HepG2 (cell line): ENCODE measurements at regions of chr10 and their contacts with region 1.

Region 1: GRCh38 chr10:119542988-119543813 is 682 bp upstream of the RGS10 start:
- DNase-seq: peak; percentile 39
- ATAC-seq: peak; percentile 83
- H3K4me3 ChIP-seq: peak overlapping the region; percentile 46 to 71 (median 55)
- H3K27ac ChIP-seq: no peak overlapping the region
- H3K4me1 ChIP-seq: peaks cover 21% of the 10 kb centered on the region
- H3K27me3 ChIP-seq: peaks cover 6 to 43% of the 10 kb centered on the region in 2 experiments; a peak in 4 of 5 replicates
- CTCF ChIP-seq: peak; percentile 61
- EP300 ChIP-seq: no peak
- POLR2A ChIP-seq: no peak
- RAD21 ChIP-seq: peak; percentile 52

Region 2: DNA sequence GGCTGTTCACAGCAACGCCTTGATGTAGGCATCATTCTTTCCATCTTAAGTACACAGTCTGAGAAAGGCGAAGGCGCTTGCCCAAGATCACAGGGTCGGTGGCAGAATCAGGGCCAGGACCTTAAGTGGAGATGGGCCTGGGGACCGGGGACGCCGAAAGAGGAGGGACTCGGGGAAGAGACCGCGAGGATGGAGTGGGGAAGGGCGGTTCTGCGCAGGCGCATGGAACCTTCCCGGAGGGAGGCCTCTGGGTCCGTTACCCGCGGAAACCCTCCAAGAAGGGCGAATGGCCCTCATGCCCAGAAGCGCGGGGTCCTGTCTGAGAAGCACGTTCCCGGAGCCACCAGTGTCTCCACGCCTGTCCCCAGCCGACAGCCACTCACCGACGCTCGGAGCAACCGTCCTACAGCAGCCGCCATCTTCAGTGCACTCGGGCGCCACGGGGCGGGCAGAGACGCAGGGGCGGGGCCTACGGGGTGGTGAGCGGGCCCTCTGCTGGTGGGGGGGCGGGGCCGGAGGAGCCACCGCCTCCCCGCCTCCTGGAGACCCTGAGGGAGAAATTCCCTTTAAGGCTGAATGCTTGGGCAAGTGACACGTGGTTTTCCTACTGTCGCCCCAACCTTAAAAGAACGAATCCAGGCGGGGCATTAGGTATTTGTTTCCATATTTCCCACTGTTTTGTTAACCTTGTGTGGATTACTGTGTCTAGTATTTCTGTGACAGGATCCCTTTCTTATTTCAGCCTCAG is 364.7 kb before region 1 on chr10 and contains the start of gene PRDX3:
- CTCF ChIA-PET with region 1: no interaction called
- POLR2A ChIA-PET with region 1: no interaction called
- in situ Hi-C with region 1: loop called (anchors 25 kb)
- intact Hi-C with region 1: no loop called
- DNase-seq: peak; percentile 85
- ATAC-seq: peak; percentile 90
- H3K4me3 ChIP-seq: peak within 1 kb of the TSS; percentile 75 to 94 (median 81)
- H3K27ac ChIP-seq: peak within 1 kb of the TSS; percentile 93
- H3K4me1 ChIP-seq: peaks cover 52% of the 10 kb centered on the region
- H3K27me3 ChIP-seq: no peaks in the 10 kb centered on the region; a peak in 1 of 5 replicates
- CTCF ChIP-seq: peak; percentile 44
- EP300 ChIP-seq: no peak
- POLR2A ChIP-seq: peak; percentile 89 to 95
- RAD21 ChIP-seq: no peak
- total RNA-seq, gene PRDX3: 407 and 643 TPM in 2 replicates

Region 3: DNA sequence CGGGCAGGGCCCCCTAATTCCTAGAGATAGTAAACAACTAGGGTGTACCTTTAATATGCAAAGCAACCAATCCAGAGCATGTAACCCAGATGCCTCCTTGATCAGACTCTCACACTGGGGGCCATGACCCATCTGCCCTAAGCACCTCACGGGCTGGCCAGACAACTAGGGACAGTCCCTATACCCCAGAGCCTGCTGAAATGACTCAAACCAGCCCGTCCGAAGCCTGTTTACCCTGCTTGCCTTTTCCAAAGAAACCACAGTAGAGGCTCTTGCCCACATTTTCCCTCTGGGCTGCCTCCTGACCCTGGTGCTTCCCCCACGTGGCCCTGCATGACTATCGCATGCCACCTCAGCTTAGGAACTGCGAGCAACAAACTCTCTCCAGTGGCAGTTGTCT is 46.9 kb before region 1 on chr10:
- CTCF ChIA-PET with region 1: no interaction called
- POLR2A ChIA-PET with region 1: no interaction called
- in situ Hi-C with region 1: loop called (anchors 5 kb)
- intact Hi-C with region 1: loop called (anchors 5 kb)
- DNase-seq: peak; percentile 29
- ATAC-seq: no peak; the same call in 2 of the 3 replicates
- H3K4me3 ChIP-seq: no peak overlapping the region
- H3K27ac ChIP-seq: no peak overlapping the region
- H3K4me1 ChIP-seq: peaks cover 72% of the 10 kb centered on the region
- H3K27me3 ChIP-seq: no peaks in the 10 kb centered on the region; a peak in 1 of 5 replicates
- CTCF ChIP-seq: no peak
- EP300 ChIP-seq: no peak
- POLR2A ChIP-seq: no peak
- RAD21 ChIP-seq: no peak

Region 4: DNA sequence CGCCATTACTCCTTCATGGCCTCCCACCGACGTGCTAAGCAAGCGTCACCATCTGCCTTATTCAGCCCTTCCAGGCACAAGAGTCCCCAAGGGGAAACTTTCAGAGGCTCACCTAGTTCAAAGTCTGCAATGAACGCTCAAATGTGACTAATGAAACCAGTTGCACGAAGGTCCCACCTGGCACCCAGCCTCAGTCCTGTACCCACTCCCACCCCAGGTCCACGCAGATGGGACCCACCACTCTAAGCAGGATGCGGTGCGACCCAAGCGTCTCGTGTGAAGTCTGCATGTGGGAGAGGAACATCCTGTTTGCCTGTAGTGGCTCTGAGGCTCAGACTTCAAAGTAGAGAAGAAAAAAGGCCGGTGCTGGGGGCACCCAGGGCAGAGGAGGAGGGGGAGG is 41.0 kb before region 1 on chr10:
- CTCF ChIA-PET with region 1: no interaction called
- POLR2A ChIA-PET with region 1: no interaction called
- in situ Hi-C with region 1: loop called (anchors 5 kb)
- intact Hi-C with region 1: loop called (anchors 5 kb)
- DNase-seq: no peak
- ATAC-seq: no peak
- H3K4me3 ChIP-seq: no peak overlapping the region; a peak in 1 of 6 replicates
- H3K27ac ChIP-seq: no peak overlapping the region
- H3K4me1 ChIP-seq: peaks cover 54% of the 10 kb centered on the region
- H3K27me3 ChIP-seq: no peaks in the 10 kb centered on the region; a peak in 1 of 5 replicates
- CTCF ChIP-seq: no peak
- EP300 ChIP-seq: no peak
- POLR2A ChIP-seq: no peak
- RAD21 ChIP-seq: no peak

Region 5: DNA sequence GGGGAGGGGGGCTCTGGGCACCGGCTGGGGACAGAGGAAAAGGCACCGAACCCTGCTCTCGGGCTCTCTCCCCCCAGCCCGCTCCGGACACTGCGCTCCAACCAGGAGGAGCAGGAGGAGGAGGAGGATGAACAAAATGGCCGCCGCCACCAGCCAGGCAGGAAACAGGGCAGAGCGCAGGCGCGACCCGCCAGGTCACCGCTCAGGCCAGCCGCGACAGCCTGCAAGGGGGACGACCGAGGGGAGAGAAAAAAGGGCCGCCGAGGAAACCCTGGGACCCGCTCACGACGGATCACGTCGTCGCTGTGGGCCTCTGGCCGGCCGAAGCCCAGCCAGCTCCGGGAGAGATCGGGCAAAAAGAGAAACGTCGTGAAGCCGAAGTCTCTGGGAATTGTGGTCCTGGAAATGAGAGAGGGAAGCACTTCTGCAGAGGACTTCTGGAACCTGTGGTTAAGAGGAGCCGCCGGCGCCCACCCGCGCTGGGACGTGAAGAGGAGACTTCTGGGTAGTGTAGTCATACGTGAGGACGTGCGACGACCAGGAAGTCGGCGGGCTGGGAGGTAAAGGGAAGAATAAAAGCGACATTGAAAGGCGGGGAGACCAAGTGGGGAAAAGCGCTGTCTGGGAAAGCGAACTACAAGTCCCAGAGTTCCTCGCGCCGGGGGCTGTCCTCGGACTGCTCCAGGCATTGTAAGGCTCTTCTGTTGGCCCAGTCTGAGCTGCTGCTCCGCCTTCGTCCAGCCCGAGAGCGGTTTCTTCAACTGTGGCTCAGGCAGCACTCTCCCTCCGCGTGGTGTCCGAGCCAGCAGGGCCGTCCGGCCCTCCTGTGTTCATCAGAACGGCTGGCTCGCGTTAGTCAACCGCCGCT is 53.6 kb after region 1 on chr10 and contains the start of gene TIAL1:
- CTCF ChIA-PET with region 1: no interaction called
- POLR2A ChIA-PET with region 1: no interaction called
- in situ Hi-C with region 1: no loop called
- intact Hi-C with region 1: loop called (anchors 1 kb)
- DNase-seq: peak; percentile 99
- ATAC-seq: peak; percentile 96
- H3K4me3 ChIP-seq: peak within 1 kb of the TSS; percentile 89 to 90 (median 90)
- H3K27ac ChIP-seq: peak within 1 kb of the TSS; percentile 98
- H3K4me1 ChIP-seq: peaks cover 45% of the 10 kb centered on the region
- H3K27me3 ChIP-seq: no peaks in the 10 kb centered on the region; a peak in 1 of 5 replicates
- CTCF ChIP-seq: 0 out of 2 replicates have a peak, but pooled peaks have one; percentile 14
- EP300 ChIP-seq: peak; percentile 10 to 11; a peak in 1 of 4 replicates
- POLR2A ChIP-seq: peak; percentile 79 to 96
- RAD21 ChIP-seq: no peak; the same call in 1 of the 2 replicates
- total RNA-seq, gene TIAL1: 31.5 and 36.6 TPM in 2 replicates